ENCODE measurements at regions of chr10 and their contacts with region 1.

Region 1: GRCh38 chr10:8889538-8889937 is 835.0 kb downstream of the GATA3 start:
- DNase-seq: no peak
- H3K4me3 ChIP-seq: no peak overlapping the region
- H3K27ac ChIP-seq: no peak overlapping the region
- H3K4me1 ChIP-seq: no peaks in the 10 kb centered on the region
- H3K27me3 ChIP-seq: no peaks in the 10 kb centered on the region
- CTCF ChIP-seq: no peak
- POLR2A ChIP-seq: no peak

Region 2: DNA sequence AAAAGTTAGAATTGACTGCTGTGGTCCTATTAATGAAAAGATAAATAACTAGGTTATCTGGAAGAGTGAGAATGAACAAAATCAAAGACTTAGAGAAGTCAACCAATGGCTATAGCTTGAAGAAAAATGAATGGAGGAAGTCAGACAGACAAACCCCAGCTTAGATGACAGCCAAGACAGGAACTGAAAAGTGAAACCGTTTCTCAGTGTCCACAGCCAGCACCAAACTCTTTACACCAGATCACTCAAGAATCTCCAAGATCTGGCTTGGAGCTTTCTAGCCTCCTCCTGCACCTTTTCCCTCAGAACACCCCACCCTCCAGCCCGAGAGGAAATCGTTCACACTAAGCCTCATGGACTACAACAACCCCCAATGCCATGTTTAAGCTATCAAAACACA is 1645.7 kb before region 1 on chr10:
- intact Hi-C with region 1: no loop called
- DNase-seq: no peak
- H3K4me3 ChIP-seq: no peak overlapping the region
- H3K27ac ChIP-seq: no peak overlapping the region
- H3K4me1 ChIP-seq: no peaks in the 10 kb centered on the region
- H3K27me3 ChIP-seq: no peaks in the 10 kb centered on the region
- CTCF ChIP-seq: no peak
- POLR2A ChIP-seq: no peak

Region 3: DNA sequence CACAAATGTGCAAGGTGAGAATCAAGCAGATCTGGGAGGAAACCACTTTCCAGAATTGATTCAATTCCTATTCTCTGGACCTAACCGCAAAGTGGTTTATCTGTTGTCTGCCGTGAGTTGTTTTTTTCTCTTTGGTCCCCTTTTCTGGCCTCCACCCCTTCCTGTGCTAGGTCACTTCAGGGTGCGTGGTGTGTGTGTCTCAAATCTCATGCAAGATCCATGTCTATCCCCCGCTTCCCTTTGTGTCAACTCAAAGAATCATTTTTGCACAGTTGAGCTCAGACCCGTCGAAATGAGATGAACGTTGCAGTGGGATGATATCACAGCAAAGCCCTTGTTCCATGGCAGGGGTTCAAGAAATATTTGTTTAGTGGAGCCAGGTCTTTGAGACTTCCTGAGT is 650.6 kb before region 1 on chr10:
- intact Hi-C with region 1: loop called (anchors 5 kb)
- DNase-seq: no peak
- H3K4me3 ChIP-seq: no peak overlapping the region
- H3K27ac ChIP-seq: no peak overlapping the region
- H3K4me1 ChIP-seq: no peaks in the 10 kb centered on the region
- H3K27me3 ChIP-seq: no peaks in the 10 kb centered on the region
- CTCF ChIP-seq: no peak
- POLR2A ChIP-seq: no peak

Region 4: DNA sequence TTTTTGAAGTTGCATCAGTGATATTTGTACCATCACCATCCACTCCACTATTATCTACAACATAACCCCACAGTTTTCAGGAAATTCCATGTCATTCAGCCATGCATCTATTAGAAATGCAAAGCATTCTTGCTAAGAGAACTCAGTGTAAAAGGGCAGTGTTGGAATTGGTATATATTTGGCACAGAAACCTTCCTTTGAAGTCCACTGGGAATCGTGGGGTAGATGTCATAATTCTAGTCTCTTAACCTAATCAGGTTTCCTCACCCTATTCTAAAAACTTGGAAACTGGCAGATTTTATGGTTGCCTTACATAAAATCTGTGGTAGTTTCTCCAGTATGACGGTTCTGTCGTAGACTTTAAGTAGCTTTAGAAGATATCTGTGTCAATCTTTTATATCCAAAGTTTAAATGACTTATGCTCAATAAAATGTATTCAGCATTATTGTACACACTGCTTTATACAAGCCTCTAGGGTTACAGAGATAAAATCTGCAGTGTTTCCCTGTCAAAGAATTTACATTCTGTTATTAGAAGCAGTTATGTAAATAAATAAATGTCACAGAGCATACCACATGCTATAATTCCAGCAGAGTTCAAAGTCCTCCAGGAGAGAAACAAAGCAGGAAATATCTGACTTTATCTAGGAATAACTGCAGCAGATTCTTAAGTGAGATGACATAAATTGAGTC is 1423.8 kb after region 1 on chr10:
- intact Hi-C with region 1: no loop called
- DNase-seq: no peak
- H3K4me3 ChIP-seq: no peak overlapping the region
- H3K27ac ChIP-seq: no peak overlapping the region
- H3K4me1 ChIP-seq: no peaks in the 10 kb centered on the region
- H3K27me3 ChIP-seq: no peaks in the 10 kb centered on the region
- CTCF ChIP-seq: no peak
- POLR2A ChIP-seq: no peak